Heart right ventricle (tissue), 16 donors: ENCODE measurements at regions of chr5 and their contacts with region 1.

Region 1: GRCh38 chr5:140060816-140061215 is 17.7 kb upstream of the NRG2 start:
- DNase-seq: no peak
- ATAC-seq: no peak
- H3K4me3 ChIP-seq: no peak overlapping the region
- H3K27ac ChIP-seq: no peak overlapping the region
- H3K4me1 ChIP-seq: peaks cover 0 to 2% (median 0%) of the 10 kb centered on the region in 9 donors
- H3K27me3 ChIP-seq: peaks cover 0 to 78% (median 8%) of the 10 kb centered on the region in 7 donors
- CTCF ChIP-seq: no peak

Region 2: DNA sequence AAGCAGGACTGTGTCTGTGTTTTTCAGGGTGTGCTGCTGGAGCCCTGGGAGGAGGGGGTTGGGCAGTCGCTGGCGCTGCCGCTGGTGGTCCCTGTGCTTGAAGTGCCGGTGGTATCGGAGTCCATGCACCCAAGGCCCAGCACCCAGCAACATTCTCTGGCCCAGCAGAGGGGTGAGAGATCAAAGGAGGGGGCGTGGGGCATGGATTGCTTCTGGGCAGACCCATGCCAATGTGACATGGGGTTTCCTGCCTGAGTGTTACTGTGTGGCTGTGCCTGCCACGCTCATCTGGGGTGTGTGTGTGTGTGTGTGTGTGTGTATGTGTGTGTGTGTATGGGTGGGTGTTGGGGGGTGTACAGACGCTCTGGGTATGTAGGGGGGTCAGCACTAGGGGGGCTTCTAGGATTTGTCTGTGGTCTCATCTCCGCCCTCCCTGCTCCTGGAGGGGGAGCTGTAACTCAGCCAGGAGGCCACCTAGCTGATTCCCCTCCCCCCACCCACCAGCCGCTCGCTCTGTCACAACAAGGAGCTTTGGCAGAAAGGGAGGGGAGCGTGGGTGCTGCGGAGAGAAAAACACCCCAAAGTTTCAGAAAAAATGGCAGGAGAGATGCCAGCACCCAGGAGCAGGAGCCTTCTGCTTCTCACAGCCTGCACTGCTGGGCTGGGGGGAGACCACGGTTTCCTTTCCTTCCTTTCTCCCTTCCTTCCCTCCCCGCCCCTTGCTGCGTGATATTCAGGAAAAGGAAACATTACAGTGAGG is 1449.7 kb before region 1 on chr5:
- intact Hi-C with region 1: no loop called
- DNase-seq: no peak
- ATAC-seq: peak; percentile 28 to 85 (median 70)
- H3K4me3 ChIP-seq: peak overlapping the region in 9 of 10 donors; percentile 24 to 56 (median 48)
- H3K27ac ChIP-seq: peak overlapping the region in 7 of 10 donors; percentile 6 to 65 (median 41)
- H3K4me1 ChIP-seq: peaks cover 0 to 22% (median 7%) of the 10 kb centered on the region in 9 donors
- H3K27me3 ChIP-seq: peaks cover 0 to 14% (median 0%) of the 10 kb centered on the region in 7 donors
- CTCF ChIP-seq: peak in 1 of 9 donors; percentile 22

Region 3: DNA sequence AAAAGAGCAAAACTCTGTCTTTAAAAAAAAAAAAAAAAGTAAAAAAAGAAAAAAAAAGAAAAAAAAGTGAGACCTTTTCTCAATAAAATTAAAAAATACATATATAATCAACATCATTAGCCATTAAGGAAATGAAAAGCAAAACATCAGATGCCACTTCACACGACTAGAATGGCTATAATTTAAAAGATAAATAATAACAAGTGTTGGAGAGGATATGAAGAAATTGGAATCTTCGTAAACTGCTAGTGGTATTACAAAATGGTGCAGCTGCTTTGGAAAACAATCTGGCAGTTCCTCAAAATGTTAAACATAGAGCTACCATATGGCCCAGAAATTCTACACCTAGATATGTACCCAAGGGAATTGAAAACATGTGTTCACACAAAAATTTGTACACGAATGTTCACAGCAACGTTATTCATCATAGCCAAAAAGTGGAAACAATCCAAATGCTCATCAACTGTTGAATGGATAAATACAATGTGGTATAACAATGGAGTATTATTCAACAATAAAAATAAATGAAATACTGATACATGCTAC is 817.3 kb before region 1 on chr5:
- intact Hi-C with region 1: no loop called
- DNase-seq: no peak
- ATAC-seq: no peak
- H3K4me3 ChIP-seq: no peak overlapping the region
- H3K27ac ChIP-seq: no peak overlapping the region
- H3K4me1 ChIP-seq: peaks cover 0 to 14% (median 0%) of the 10 kb centered on the region in 9 donors
- H3K27me3 ChIP-seq: no peaks in the 10 kb centered on the region
- CTCF ChIP-seq: no peak

Region 4: GRCh38 chr5:139670369-139671095 is 390.3 kb before region 1 on chr5:
- intact Hi-C with region 1: no loop called
- DNase-seq: no peak
- ATAC-seq: peak in 6 of 8 donors; percentile 8 to 42 (median 34)
- H3K4me3 ChIP-seq: peak overlapping the region in 9 of 10 donors; percentile 38 to 66 (median 57)
- H3K27ac ChIP-seq: peak overlapping the region; percentile 88 to 98 (median 94)
- H3K4me1 ChIP-seq: peaks cover 62 to 99% (median 96%) of the 10 kb centered on the region in 9 donors
- H3K27me3 ChIP-seq: no peaks in the 10 kb centered on the region
- CTCF ChIP-seq: peak in 5 of 9 donors; percentile 22 to 53 (median 46)

Region 5: DNA sequence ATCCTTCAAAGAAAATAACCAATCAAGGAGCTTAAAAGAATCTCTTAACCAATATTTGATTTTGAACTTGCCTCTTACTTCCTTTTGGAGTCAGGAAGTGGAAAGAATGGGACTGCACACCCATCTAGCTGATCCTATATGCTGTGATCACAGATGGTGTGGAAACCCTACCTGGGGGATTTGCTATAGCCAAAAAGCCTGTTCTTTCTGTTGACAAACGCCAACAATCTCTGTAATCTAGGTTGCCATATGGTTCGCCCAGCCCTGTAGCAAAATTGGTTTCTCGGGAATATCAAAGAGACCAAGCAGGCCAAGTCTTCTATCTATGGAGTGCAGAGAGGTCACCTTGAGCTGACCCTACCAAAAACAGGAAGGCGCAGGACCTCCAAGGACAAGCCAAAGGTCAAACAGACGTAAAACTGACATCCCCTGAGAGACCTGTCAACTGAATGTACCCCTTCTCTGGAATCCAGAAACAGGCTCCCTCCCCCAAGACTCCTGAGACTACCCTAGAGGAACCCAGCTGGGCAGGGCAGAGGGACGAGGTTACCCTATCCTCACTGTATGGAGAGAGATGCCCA is 37.1 kb before region 1 on chr5:
- intact Hi-C with region 1: loop called in 1 of 10 experiments (anchors 2 kb)
- DNase-seq: no peak
- ATAC-seq: no peak
- H3K4me3 ChIP-seq: no peak overlapping the region
- H3K27ac ChIP-seq: no peak overlapping the region
- H3K4me1 ChIP-seq: peaks cover 0 to 41% (median 10%) of the 10 kb centered on the region in 9 donors
- H3K27me3 ChIP-seq: no peaks in the 10 kb centered on the region
- CTCF ChIP-seq: no peak